PC-9 (cell line): ENCODE measurements at regions of chr2 and their contacts with region 1.

Region 1: GRCh38 chr2:38720613-38721241 is 30.4 kb downstream of the SRSF7 start:
- DNase-seq: peak; percentile 87 to 98
- H3K4me3 ChIP-seq: no peak overlapping the region
- H3K27ac ChIP-seq: peak overlapping the region; percentile 69
- H3K4me1 ChIP-seq: peaks cover 38% of the 10 kb centered on the region
- H3K27me3 ChIP-seq: no peaks in the 10 kb centered on the region
- CTCF ChIP-seq: no peak

Region 2: DNA sequence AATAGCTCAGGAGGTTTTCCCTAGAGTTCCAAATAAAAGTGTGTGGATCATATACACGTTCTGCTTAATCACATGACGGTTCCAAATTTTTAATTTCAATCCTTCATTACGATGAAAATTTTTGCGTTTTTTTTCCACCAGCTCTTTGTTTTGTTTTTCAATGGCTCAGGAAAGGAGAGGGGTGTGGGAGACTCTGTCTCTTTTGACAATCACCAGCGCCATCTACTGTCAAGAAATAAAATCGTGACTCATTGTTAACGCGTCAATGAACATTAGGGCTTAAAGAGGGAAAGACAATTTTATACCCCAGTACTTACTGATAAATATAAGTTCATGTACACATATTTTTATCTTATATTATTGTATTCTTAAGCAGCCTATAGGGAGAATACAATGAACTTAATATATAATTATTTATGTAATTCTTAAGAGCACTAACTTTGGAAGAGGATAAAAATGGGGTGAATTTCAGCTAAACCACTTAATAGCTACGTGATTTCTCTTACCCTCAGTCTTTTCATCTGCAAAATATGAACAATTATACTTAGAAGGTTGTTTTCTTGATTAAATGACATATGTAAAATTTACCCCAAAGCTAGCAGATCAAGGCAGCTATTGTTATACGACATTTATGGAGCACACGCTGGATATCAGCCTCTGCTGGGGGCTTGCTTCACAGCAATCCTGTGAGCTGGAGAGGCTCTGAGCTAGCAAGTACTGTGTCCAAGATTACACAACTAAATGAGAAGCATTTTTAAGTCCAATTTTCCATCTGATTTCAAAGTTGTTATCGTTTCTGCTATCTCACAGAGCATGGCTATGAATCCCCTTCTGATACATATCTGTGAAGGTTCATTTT is 843.0 kb before region 1 on chr2:
- CTCF ChIA-PET with region 1: no interaction called
- POLR2A ChIA-PET with region 1: no interaction called
- intact Hi-C with region 1: no loop called
- DNase-seq: peak; percentile 31 to 38
- H3K4me3 ChIP-seq: no peak overlapping the region
- H3K27ac ChIP-seq: no peak overlapping the region
- H3K4me1 ChIP-seq: no peaks in the 10 kb centered on the region
- H3K27me3 ChIP-seq: no peaks in the 10 kb centered on the region
- CTCF ChIP-seq: peak; percentile 93

Region 3: DNA sequence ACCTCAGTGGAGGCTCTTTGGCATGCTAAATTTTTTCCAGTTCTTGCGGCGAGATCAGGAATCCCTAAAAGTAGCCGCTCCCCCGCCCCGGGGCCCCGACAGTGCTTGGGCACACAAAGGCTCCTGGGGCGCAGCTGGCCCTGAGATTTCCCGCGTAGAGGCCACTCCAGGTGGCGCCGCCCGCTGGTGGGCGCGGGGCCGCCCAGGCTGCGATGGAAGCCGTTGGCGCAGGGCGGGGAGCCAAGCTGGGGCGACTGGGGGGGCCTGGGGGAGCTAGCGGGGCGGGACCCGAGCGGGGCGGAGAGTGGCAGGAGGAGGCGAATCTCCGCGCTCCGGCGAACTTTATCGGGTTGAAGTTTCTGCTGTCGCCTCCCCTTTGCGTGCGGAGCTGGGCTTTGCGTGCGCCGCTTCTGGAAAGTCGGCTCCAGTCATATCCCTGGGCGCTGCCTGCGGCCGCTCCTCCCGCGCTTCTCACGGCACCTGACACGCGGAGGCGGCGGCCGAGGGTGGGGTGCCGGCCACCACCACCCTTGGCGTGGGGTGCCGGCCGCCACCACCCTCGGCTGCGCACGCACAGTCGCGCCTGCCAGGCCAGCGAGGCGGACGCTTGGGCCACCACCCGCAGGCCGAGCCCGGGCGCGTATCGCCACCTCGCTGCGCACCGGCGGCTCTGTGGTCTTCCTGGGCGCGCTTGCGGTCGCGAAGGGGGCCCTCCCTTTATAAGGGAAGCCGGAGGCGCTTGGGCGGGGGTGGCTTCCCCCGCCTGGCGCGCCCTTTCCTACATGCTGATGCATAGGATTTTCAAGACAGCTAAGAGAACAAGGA is 643.9 kb before region 1 on chr2:
- CTCF ChIA-PET with region 1: no interaction called
- POLR2A ChIA-PET with region 1: no interaction called
- intact Hi-C with region 1: no loop called
- DNase-seq: peak; percentile 94
- H3K4me3 ChIP-seq: peak overlapping the region; percentile 69
- H3K27ac ChIP-seq: peak overlapping the region; percentile 98
- H3K4me1 ChIP-seq: peaks cover 45% of the 10 kb centered on the region
- H3K27me3 ChIP-seq: no peaks in the 10 kb centered on the region
- CTCF ChIP-seq: peak; percentile 77

Region 4: GRCh38 chr2:38535744-38536506 is 184.8 kb before region 1 on chr2:
- CTCF ChIA-PET with region 1: no interaction called
- POLR2A ChIA-PET with region 1: no interaction called
- intact Hi-C with region 1: loop called (anchors 2 kb)
- DNase-seq: peak; percentile 61 to 84
- H3K4me3 ChIP-seq: peak overlapping the region; percentile 96
- H3K27ac ChIP-seq: no peak overlapping the region
- H3K4me1 ChIP-seq: no peaks in the 10 kb centered on the region
- H3K27me3 ChIP-seq: no peaks in the 10 kb centered on the region
- CTCF ChIP-seq: peak; percentile 96

Region 5: GRCh38 chr2:38602732-38603401 is 117.9 kb before region 1 on chr2 and contains the start of gene HNRNPLL:
- CTCF ChIA-PET with region 1: no interaction called
- POLR2A ChIA-PET with region 1: interaction called, 6 read pairs
- intact Hi-C with region 1: loop called (anchors 1 kb)
- DNase-seq: peak; percentile 92 to 99
- H3K4me3 ChIP-seq: peak within 1 kb of the TSS; percentile 69
- H3K27ac ChIP-seq: peak within 1 kb of the TSS; percentile 54
- H3K4me1 ChIP-seq: peaks cover 34% of the 10 kb centered on the region
- H3K27me3 ChIP-seq: no peaks in the 10 kb centered on the region
- CTCF ChIP-seq: no peak
- total RNA-seq, gene HNRNPLL: 38.1 and 39.5 TPM in 2 replicates

Region 6: GRCh38 chr2:38619458-38620164 is 101.1 kb before region 1 on chr2:
- CTCF ChIA-PET with region 1: interaction called, 21 read pairs
- POLR2A ChIA-PET with region 1: no interaction called
- intact Hi-C with region 1: no loop called
- DNase-seq: no peak
- H3K4me3 ChIP-seq: no peak overlapping the region
- H3K27ac ChIP-seq: no peak overlapping the region
- H3K4me1 ChIP-seq: no peaks in the 10 kb centered on the region
- H3K27me3 ChIP-seq: no peaks in the 10 kb centered on the region
- CTCF ChIP-seq: no peak

Region 7: DNA sequence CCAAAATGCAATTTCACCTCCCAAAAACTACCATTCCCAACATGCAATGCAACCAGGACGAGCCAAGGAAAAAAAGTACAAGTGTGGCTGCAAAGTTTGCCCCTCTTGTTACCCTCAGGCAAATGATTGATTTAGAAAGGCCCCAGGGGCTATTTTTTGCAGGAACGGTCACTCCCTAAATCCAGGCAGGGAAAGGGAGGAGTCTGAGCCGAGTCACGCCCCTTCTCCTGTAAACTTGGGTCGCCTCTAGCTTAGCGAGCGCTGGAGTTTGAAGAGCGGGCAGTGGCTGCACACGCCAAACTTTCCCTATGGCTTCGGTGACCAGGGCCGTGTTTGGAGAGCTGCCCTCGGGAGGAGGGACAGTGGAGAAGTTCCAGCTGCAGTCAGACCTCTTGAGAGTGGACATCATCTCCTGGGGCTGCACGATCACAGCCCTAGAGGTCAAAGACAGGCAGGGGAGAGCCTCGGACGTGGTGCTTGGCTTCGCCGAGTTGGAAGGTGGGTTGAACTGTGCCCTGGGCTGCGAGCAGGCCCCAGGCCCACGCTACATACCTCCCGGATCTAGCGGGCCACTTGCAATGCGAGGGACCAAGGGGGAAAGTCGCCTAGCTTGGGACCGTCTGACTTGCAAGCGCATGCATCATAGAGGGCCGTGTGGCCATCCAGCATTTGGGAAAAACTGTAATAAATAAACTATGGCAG is 54.7 kb before region 1 on chr2 and contains the start of gene GALM:
- CTCF ChIA-PET with region 1: no interaction called
- POLR2A ChIA-PET with region 1: interaction called, 6 read pairs
- intact Hi-C with region 1: loop called (anchors 1 kb)
- DNase-seq: peak; percentile 85 to 86
- H3K4me3 ChIP-seq: peak within 1 kb of the TSS; percentile 67
- H3K27ac ChIP-seq: peak within 1 kb of the TSS; percentile 51
- H3K4me1 ChIP-seq: peaks cover 12% of the 10 kb centered on the region; the same call in 1 of the 2 replicates
- H3K27me3 ChIP-seq: no peaks in the 10 kb centered on the region
- CTCF ChIP-seq: no peak
- total RNA-seq, gene GALM: 26.3 and 27.7 TPM in 2 replicates

Region 8: DNA sequence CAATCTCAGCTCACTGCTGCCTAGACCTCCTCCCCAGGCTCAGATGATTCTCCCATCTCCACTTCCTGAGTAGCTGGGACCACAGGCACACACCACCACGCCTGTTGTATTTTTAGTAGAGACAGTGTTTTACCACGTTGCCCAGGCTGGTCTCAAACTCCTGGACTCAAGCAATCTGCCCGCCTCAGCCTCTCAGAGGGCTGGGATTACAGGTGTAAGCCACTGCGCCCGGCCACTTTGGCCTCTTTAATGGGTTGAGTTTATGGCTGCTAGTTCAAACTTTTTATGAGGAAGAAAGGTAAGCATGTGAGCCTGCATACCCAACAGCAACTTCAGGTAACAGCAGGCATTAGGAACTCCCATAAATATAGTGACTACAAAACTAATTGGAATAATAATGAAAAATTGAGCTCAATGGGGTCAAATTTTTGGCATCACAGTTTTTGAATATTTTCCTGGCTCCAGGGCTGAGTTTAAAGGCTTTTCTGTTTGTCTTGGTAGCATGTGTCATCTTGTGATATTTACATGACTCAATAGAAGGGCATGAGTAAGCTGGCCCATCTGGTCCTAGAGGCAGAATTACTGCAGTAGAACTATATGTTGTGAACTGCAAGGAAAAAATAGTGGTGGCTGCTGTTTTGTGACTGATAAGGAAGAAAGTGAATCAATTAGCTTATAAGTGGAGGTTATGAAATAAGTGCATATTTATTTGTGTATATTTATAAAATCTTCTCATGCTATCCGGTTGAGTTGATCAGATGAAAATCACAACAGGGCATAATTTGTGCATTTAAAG is 30.0 kb before region 1 on chr2:
- CTCF ChIA-PET with region 1: interaction called, 9 read pairs
- POLR2A ChIA-PET with region 1: interaction called, 3 read pairs
- intact Hi-C with region 1: loop called (anchors 1 kb)
- DNase-seq: peak; percentile 52 to 99
- H3K4me3 ChIP-seq: no peak overlapping the region
- H3K27ac ChIP-seq: peak overlapping the region; percentile 87
- H3K4me1 ChIP-seq: peaks cover 55% of the 10 kb centered on the region
- H3K27me3 ChIP-seq: no peaks in the 10 kb centered on the region
- CTCF ChIP-seq: no peak